ENCODE measurements at regions of chr12 and their contacts with region 1.

Region 1: GRCh38 chr12:120317224-120318105 is 10.1 kb downstream of the PLA2G1B start:
- DNase-seq: peak; percentile 99
- ATAC-seq: peak; percentile 98
- H3K4me3 ChIP-seq: peak overlapping the region; percentile 65 to 70
- H3K27ac ChIP-seq: peak overlapping the region; percentile 55
- H3K4me1 ChIP-seq: peaks cover 2 to 15% of the 10 kb centered on the region in 2 experiments; a peak in 1 of 4 replicates
- H3K27me3 ChIP-seq: no peaks in the 10 kb centered on the region
- CTCF ChIP-seq: peak; percentile 45 to 87 (median 57)
- POLR2A ChIP-seq: peak; percentile 82
- RAD21 ChIP-seq: no peak

Region 2: GRCh38 chr12:120276734-120277133 is 40.7 kb before region 1 on chr12:
- CTCF ChIA-PET with region 1: no interaction called
- POLR2A ChIA-PET with region 1: no interaction called
- RAD21 ChIA-PET with region 1: no interaction called
- intact Hi-C with region 1: no loop called
- DNase-seq: no peak
- ATAC-seq: no peak
- H3K4me3 ChIP-seq: no peak overlapping the region
- H3K27ac ChIP-seq: no peak overlapping the region
- H3K4me1 ChIP-seq: no peaks in the 10 kb centered on the region
- H3K27me3 ChIP-seq: no peaks in the 10 kb centered on the region
- CTCF ChIP-seq: no peak
- POLR2A ChIP-seq: no peak
- RAD21 ChIP-seq: no peak

Region 3: DNA sequence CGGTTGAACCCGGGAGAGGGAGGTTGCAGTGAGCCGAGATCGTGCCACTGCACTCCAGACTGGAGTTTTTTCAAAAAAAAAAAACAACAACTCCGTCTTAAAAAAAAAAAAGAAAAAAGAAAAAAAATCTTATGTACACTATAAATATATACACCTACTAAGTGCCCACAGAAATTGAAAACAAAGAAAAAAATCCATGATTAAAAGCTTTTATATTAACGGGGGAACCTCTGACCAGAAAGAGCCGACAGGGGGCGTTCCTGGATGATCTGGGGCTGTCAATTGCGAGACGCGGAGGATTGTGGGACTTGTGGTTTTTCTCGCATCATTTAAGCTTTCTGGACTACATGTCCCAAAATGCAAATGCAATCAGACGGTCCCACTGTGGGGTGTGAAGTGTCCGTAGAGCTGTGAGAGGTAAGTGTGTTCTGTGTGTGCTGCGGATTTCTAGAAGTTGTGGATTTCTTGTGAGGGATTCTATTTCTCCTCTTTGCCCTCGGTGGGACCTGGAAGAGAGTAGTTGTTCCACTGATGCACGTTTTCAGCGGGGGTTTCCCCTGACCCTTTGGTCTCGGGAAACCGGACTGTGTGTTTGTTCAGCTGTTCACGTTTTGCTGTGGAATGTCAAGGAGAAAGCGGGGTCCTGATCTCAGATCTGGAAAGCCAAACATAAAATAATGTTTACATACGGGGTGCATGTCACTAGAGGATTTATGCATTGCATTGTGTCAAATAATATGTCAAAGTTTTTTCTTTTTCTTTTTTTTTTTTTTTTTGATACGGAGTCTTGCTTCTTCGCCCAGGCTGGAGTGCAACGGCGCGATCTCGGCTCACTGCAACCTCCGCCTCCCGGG is 15.3 kb before region 1 on chr12 and contains the start of gene SIRT4:
- CTCF ChIA-PET with region 1: interaction called, 21 read pairs
- POLR2A ChIA-PET with region 1: no interaction called
- RAD21 ChIA-PET with region 1: interaction called in 1 of 2 experiments, 3 read pairs
- intact Hi-C with region 1: no loop called
- DNase-seq: peak; percentile 91
- ATAC-seq: peak; percentile 98
- H3K4me3 ChIP-seq: peak within 1 kb of the TSS; percentile 67 to 68
- H3K27ac ChIP-seq: no peak within 1 kb of the TSS
- H3K4me1 ChIP-seq: peaks cover 3 to 15% of the 10 kb centered on the region in 2 experiments; a peak in 1 of 4 replicates
- H3K27me3 ChIP-seq: no peaks in the 10 kb centered on the region
- CTCF ChIP-seq: peak; percentile 69 to 75 (median 74); a peak in 5 of 6 replicates
- POLR2A ChIP-seq: no peak
- RAD21 ChIP-seq: peak; percentile 42
- total RNA-seq, gene SIRT4: 2.8 TPM

Region 4: GRCh38 chr12:120534203-120534702 is 216.8 kb after region 1 on chr12 and contains the start of gene RNF10:
- CTCF ChIA-PET with region 1: no interaction called
- POLR2A ChIA-PET with region 1: no interaction called
- RAD21 ChIA-PET with region 1: no interaction called
- intact Hi-C with region 1: loop called (anchors 10 kb)
- DNase-seq: peak; percentile 87
- ATAC-seq: peak; percentile 75
- H3K4me3 ChIP-seq: peak within 1 kb of the TSS; percentile 81 to 95
- H3K27ac ChIP-seq: peak within 1 kb of the TSS; percentile 80
- H3K4me1 ChIP-seq: peaks cover 26 to 55% of the 10 kb centered on the region in 2 experiments
- H3K27me3 ChIP-seq: no peaks in the 10 kb centered on the region
- CTCF ChIP-seq: no peak
- POLR2A ChIP-seq: peak; percentile 94
- RAD21 ChIP-seq: no peak
- total RNA-seq, gene RNF10: 141 TPM

Region 5: DNA sequence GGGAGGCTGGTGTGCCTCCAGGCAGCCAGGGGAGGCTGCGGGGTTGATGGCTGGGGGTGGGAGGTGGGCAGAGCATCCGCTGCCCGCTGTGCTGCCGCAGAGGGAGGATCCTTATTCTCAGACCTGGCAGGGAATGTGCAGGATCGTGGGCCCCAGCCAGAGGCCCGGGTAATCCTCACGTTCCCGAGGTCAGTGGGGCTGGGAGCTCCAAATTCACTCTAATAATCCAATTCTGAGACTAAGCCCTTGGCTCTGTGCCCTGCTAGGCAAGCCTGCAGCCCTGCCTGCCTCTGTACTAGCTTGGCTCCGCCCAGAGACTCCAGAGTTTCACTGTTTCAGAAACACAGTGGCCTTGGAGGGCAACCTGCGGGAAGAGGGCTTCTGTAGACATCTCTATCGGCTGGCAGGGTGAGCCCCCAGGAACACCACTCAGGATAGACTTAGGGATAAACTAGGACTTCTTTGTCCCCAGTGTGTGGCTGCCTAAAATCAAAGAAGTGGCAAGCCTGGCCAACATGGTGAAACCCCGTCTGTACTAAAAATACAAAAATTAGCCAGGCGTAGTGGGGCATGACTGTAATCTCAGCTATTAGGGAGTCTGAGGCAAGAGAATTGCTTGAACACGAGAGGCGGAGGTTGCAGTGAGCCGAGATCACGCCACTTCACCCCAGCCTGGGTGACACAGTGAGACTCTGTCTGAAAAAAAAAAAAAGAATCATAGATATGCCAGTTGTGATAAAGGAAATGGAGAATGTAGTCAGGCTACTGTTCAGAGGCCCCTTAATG is 351.8 kb after region 1 on chr12:
- CTCF ChIA-PET with region 1: no interaction called
- POLR2A ChIA-PET with region 1: no interaction called
- RAD21 ChIA-PET with region 1: no interaction called
- intact Hi-C with region 1: no loop called
- DNase-seq: no peak
- ATAC-seq: peak; percentile 56
- H3K4me3 ChIP-seq: no peak overlapping the region
- H3K27ac ChIP-seq: no peak overlapping the region
- H3K4me1 ChIP-seq: peaks cover 3 to 25% of the 10 kb centered on the region in 2 experiments; a peak in 3 of 4 replicates
- H3K27me3 ChIP-seq: no peaks in the 10 kb centered on the region
- CTCF ChIP-seq: no peak
- POLR2A ChIP-seq: no peak
- RAD21 ChIP-seq: no peak